ENCODE measurements at regions of chr10 and their contacts with region 1.

Region 1: GRCh38 chr10:27742195-27743011 is 3.2 kb downstream of the MKX start:
- DNase-seq: no peak
- H3K4me3 ChIP-seq: peak overlapping the region; percentile 58 to 70
- H3K27ac ChIP-seq: peak overlapping the region; percentile 76
- H3K4me1 ChIP-seq: peaks cover 57% of the 10 kb centered on the region
- H3K27me3 ChIP-seq: no peaks in the 10 kb centered on the region
- CTCF ChIP-seq: peak; percentile 63 to 85 (median 69)
- POLR2A ChIP-seq: no peak

Region 2: DNA sequence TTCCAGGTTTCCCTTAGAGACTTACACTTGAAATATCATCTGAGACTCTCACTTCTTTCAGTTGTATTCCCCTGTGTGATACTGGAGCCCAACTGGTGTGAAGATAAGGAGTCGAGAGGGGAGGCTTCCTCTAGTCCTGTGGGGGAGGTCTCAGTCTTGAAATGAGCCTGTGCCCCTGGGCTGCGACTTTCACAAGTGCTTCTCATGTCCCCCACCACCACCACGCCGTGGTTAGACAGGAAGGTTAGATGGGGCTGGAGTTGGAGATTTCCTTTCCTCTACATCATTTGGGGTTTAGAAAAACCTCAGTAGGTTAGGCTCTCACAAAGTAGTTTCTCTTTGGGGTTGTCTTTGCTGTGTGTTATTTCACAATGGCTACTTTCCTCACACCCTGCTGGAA is 28.8 kb after region 1 on chr10:
- intact Hi-C with region 1: no loop called
- DNase-seq: no peak
- H3K4me3 ChIP-seq: no peak overlapping the region
- H3K27ac ChIP-seq: no peak overlapping the region
- H3K4me1 ChIP-seq: no peaks in the 10 kb centered on the region
- H3K27me3 ChIP-seq: no peaks in the 10 kb centered on the region
- CTCF ChIP-seq: no peak
- POLR2A ChIP-seq: no peak

Region 3: DNA sequence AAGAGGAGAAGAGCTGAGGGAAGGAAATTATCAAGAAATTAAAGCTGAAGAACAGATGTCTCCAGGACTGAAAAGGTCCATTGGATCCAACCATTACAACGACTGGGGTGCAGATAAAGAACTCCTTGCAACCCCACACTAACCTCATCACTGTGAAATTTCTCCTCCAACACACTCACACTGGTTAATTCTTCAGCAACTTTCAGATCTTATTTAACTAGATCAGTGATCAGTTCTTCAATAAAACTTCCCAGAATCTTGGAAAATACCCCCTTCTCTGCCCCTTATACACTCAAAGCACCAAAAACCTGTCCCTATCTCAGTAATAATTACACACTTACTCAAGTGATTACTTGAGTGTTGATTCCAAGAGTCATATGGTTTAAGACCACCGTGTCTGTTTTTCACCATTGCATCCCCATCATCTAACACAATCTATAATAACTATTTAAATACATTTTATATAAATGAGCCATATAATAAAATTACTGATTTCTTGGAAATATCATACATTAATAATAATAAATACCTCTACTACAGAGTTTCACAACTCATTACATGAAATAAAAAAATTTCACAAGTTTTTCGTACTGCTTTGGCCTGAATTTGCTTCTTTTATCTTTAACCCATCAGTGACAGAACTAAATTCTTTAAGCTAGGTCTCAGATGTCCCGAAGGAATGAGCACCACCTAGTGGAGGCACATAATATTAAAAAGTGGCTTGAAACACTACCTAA is 436.8 kb after region 1 on chr10:
- intact Hi-C with region 1: loop called (anchors 5 kb)
- DNase-seq: no peak
- H3K4me3 ChIP-seq: no peak overlapping the region
- H3K27ac ChIP-seq: peak overlapping the region; percentile 17
- H3K4me1 ChIP-seq: peaks cover 14% of the 10 kb centered on the region
- H3K27me3 ChIP-seq: no peaks in the 10 kb centered on the region
- CTCF ChIP-seq: peak; percentile 37 to 66 (median 51)
- POLR2A ChIP-seq: no peak

Region 4: DNA sequence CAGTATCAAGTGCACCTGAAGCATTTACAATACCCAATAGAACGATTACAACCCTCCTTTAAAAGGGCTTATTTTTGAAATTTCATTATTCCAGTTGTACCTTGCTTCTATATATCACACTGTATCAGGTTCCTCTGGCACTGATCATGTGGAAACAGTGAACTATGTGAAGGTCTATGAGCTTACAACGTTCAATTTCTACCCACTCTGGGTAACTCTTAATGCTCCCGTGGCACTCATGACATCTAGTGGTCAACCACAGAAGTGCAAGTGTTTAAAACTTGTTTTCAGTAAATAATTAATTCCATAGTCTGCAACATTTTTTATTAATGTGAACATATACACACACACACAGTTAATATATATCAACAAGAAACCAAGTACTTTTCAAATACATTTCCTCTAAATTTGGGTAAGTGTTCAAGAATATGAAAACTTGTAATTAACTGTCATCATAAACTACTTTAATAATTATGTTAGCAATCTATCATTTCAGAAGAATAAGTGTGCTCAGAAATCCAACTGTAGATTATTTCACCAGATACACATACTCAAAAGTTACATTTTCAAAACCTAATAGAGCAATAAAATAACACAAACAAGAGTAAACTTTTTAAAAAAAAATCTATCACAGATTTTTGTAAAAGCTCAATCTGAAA is 499.5 kb after region 1 on chr10:
- intact Hi-C with region 1: loop called (anchors 10 kb)
- DNase-seq: no peak
- H3K4me3 ChIP-seq: no peak overlapping the region
- H3K27ac ChIP-seq: no peak overlapping the region
- H3K4me1 ChIP-seq: no peaks in the 10 kb centered on the region
- H3K27me3 ChIP-seq: no peaks in the 10 kb centered on the region
- CTCF ChIP-seq: peak; percentile 75 to 88 (median 84)
- POLR2A ChIP-seq: no peak

Measured in vagina (tissue), 2 donors.